Endothelial cell of umbilical vein (primary cell): ENCODE measurements at regions of chr12 and their contacts with region 1.

Region 1: GRCh38 chr12:726281-727140 is 25.9 kb upstream of the WNK1 start:
- DNase-seq: no peak
- H3K4me3 ChIP-seq: no peak overlapping the region
- H3K27ac ChIP-seq: no peak overlapping the region
- H3K4me1 ChIP-seq: no peaks in the 10 kb centered on the region
- H3K27me3 ChIP-seq: no peaks in the 10 kb centered on the region
- CTCF ChIP-seq: no peak
- POLR2A ChIP-seq: no peak

Region 2: GRCh38 chr12:690466-690865 is 36.0 kb before region 1 on chr12:
- CTCF ChIA-PET with region 1: no interaction called
- POLR2A ChIA-PET with region 1: no interaction called
- dilution Hi-C with region 1: no loop called
- intact Hi-C with region 1: no loop called
- DNase-seq: peak; percentile 19
- H3K4me3 ChIP-seq: no peak overlapping the region
- H3K27ac ChIP-seq: no peak overlapping the region
- H3K4me1 ChIP-seq: no peaks in the 10 kb centered on the region
- H3K27me3 ChIP-seq: no peaks in the 10 kb centered on the region
- CTCF ChIP-seq: no peak
- POLR2A ChIP-seq: no peak

Region 3: GRCh38 chr12:712172-712863 is 14.2 kb before region 1 on chr12:
- CTCF ChIA-PET with region 1: interaction called, 12 read pairs
- POLR2A ChIA-PET with region 1: no interaction called
- dilution Hi-C with region 1: no loop called
- intact Hi-C with region 1: no loop called
- DNase-seq: no peak
- H3K4me3 ChIP-seq: no peak overlapping the region
- H3K27ac ChIP-seq: no peak overlapping the region
- H3K4me1 ChIP-seq: no peaks in the 10 kb centered on the region
- H3K27me3 ChIP-seq: peaks cover 0 to 2% of the 10 kb centered on the region in 2 experiments
- CTCF ChIP-seq: no peak
- POLR2A ChIP-seq: no peak